PC-3 (cell line): ENCODE measurements at regions of chr1 and their contacts with region 1.

Region 1: DNA sequence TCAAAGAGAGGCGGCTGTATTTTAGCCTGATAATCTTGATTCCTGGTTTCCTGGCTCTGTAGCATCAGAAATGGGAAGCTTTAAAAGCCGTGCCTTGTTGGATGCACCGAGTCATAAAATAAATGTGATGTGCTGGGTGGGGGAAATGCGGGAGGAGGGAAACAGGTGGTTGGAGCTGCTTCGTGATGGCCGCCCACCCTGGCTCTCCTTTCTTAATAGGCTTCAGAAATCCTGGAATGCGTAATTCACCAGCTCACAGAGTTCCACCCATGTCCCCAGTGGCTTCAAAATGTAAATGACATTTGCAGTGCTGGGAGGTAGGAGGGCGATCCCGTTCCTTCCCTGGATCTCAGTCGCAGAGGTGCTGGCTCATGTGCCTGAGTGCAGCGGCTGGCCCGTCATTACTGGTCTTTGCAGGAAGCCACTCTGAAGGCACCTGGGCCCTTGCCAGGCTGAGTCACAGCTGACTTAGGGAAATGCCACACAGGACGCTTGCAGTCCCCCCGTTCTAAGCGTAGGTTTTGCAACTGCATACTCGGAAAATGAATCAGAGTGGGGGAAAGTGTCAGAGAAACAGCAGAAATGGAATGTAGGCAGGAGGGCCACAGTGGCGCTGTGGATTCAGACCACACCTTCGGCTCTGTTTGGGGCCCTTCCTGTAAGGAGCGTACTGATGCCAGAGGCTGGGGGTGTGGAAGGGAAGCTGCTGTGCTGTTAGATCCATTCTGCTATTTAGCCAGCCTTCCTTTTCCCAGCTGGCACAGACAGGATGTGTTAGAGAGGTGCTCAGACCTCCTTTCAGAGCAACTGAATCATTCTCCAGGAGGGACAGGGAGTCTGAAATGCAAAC is 37.6 kb downstream of the GALNT2 start:
- DNase-seq: peak; percentile 100
- ATAC-seq: peak; percentile 86
- H3K4me3 ChIP-seq: peak overlapping the region; percentile 57
- H3K27ac ChIP-seq: peak overlapping the region; percentile 95
- H3K4me1 ChIP-seq: peaks cover 70% of the 10 kb centered on the region
- H3K27me3 ChIP-seq: no peaks in the 10 kb centered on the region
- CTCF ChIP-seq: peak; percentile 20; the same call in 1 of the 2 replicates

Region 2: GRCh38 chr1:230066466-230067404 is 37.9 kb before region 1 on chr1 and contains the start of gene GALNT2:
- CTCF ChIA-PET with region 1: interaction called, 4 read pairs
- POLR2A ChIA-PET with region 1: interaction called, 8 read pairs
- intact Hi-C with region 1: loop called (anchors 1 kb)
- DNase-seq: peak; percentile 98
- ATAC-seq: peak; percentile 86
- H3K4me3 ChIP-seq: peak within 1 kb of the TSS; percentile 84
- H3K27ac ChIP-seq: peak within 1 kb of the TSS; percentile 35
- H3K4me1 ChIP-seq: peaks cover 29% of the 10 kb centered on the region
- H3K27me3 ChIP-seq: no peaks in the 10 kb centered on the region
- CTCF ChIP-seq: no peak
- total RNA-seq, gene GALNT2: 182 and 193 TPM in 2 replicates

Region 3: DNA sequence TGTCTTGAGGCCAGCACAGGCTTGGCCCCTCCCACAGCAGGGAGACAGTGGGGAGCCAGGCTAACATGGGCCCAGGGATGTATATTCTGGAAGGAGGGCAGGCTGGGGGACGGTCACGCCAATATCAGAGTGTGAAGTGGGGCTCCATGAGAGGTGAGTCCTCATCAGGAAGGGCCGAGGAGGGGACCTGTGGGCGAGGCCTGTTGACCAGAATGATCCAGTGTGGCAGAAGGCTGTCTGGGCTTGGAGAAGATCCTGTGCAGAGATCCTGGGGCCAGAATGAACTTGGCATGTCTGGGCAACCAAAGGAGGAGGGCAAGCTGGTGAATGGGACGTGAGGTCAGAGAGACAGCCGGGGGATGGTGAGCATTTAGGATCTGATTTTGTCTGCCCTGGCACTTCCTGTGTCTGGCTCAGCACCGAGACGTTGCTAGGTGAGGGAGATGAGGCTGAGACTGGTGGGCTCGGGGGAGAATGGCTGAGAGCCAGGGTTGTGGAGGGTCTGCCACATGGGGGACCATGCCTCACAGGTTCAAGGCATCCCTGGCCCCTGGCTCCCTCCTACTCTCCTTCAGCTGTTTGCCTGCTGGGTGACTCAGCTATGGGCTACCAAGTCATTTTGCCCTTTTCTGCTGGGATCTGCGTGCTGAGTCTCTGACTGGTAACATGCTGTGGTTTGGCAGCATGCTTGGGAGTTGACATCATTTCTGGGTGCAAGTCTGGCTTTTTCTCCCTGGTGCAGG is 20.3 kb before region 1 on chr1:
- CTCF ChIA-PET with region 1: interaction called, 8 read pairs
- POLR2A ChIA-PET with region 1: interaction called, 13 read pairs
- intact Hi-C with region 1: loop called (anchors 1 kb)
- DNase-seq: peak; percentile 100
- ATAC-seq: peak; percentile 93
- H3K4me3 ChIP-seq: peak overlapping the region; percentile 29; the same call in 1 of the 2 replicates
- H3K27ac ChIP-seq: peak overlapping the region; percentile 83
- H3K4me1 ChIP-seq: peaks cover 59% of the 10 kb centered on the region
- H3K27me3 ChIP-seq: no peaks in the 10 kb centered on the region
- CTCF ChIP-seq: no peak

Region 4: GRCh38 chr1:230171356-230172015 is 66.9 kb after region 1 on chr1:
- CTCF ChIA-PET with region 1: no interaction called
- POLR2A ChIA-PET with region 1: interaction called, 4 read pairs
- intact Hi-C with region 1: loop called (anchors 1 kb)
- DNase-seq: peak; percentile 75
- ATAC-seq: peak; percentile 83
- H3K4me3 ChIP-seq: peak overlapping the region; percentile 15; the same call in 1 of the 2 replicates
- H3K27ac ChIP-seq: peak overlapping the region; percentile 61
- H3K4me1 ChIP-seq: peaks cover 34% of the 10 kb centered on the region
- H3K27me3 ChIP-seq: no peaks in the 10 kb centered on the region
- CTCF ChIP-seq: no peak

Region 5: DNA sequence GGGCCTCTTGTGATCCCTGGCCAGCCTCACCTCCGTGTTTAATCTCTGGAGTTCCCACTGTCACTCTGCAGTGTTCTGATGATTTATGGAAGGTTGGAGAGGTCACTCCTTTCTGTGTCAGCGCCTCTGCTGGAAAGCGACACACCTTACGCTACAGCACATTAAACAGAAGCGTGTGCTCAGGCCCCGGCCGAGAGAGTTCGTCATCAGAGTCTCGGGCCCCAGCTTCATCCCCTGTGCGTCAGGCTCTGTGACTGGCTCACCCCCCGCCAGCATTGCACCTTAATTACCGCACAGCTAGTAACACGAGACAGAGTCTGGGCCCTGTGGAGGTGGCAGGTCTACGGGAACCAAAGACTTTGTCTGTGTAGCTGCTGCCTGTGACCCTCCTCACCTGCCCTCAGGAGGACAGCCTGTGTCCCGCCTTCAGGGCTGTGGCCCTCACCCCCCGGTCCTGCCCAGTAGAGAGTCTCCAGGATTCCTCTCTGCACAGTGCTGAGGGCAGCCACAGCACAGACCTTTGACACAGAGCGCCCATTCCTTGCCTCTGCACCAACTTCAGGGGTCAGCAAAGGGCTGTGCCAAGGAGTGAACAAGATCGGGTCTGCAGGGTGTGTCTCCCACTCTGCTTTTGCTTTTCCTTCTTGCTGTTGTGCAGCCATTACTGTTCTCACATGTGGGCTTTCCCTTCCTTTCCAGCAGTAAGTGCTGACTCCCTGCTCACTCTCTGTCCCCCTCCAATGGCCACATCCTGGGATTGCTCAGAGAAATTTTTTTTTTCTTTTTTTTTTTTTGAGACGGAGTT is 163.9 kb after region 1 on chr1:
- CTCF ChIA-PET with region 1: no interaction called
- POLR2A ChIA-PET with region 1: no interaction called
- intact Hi-C with region 1: loop called (anchors 1 kb)
- DNase-seq: peak; percentile 80
- ATAC-seq: peak; percentile 83
- H3K4me3 ChIP-seq: no peak overlapping the region
- H3K27ac ChIP-seq: peak overlapping the region; percentile 8; the same call in 1 of the 2 replicates
- H3K4me1 ChIP-seq: peaks cover 4% of the 10 kb centered on the region; the same call in 1 of the 2 replicates
- H3K27me3 ChIP-seq: no peaks in the 10 kb centered on the region
- CTCF ChIP-seq: peak; percentile 85